B cell (primary cell): ENCODE measurements at regions of chr16 and their contacts with region 1.

Region 1: GRCh38 chr16:57734925-57735754 is 430 bp upstream of the KATNB1 start:
- DNase-seq: peak; percentile 99
- ATAC-seq: peak; percentile 88
- H3K4me3 ChIP-seq: peak overlapping the region; percentile 65 to 98 (median 90)
- H3K4me3 Mint-ChIP-seq: peak overlapping the region; percentile 93
- H3K27ac ChIP-seq: peak overlapping the region; percentile 37 to 78
- H3K27ac Mint-ChIP-seq: peak overlapping the region; percentile 89
- H3K4me1 ChIP-seq: peaks cover 15 to 19% of the 10 kb centered on the region in 2 donors
- H3K4me1 Mint-ChIP-seq: peaks cover 34% of the 10 kb centered on the region
- H3K27me3 ChIP-seq: no peaks in the 10 kb centered on the region
- H3K27me3 Mint-ChIP-seq: no peaks in the 10 kb centered on the region
- CTCF ChIP-seq: no peak

Region 2: GRCh38 chr16:57648590-57649442 is 86.3 kb before region 1 on chr16:
- CTCF ChIA-PET with region 1: interaction called, 6 read pairs
- POLR2A ChIA-PET with region 1: no interaction called
- intact Hi-C with region 1: loop called (anchors 5 kb)
- DNase-seq: peak; percentile 83
- ATAC-seq: peak; percentile 82
- H3K4me3 ChIP-seq: no peak overlapping the region
- H3K4me3 Mint-ChIP-seq: no peak overlapping the region
- H3K27ac ChIP-seq: peak overlapping the region; percentile 36 to 61
- H3K27ac Mint-ChIP-seq: peak overlapping the region; percentile 53
- H3K4me1 ChIP-seq: peaks cover 23 to 27% of the 10 kb centered on the region in 2 donors
- H3K4me1 Mint-ChIP-seq: peaks cover 32% of the 10 kb centered on the region
- H3K27me3 ChIP-seq: peaks cover 0 to 3% (median 0%) of the 10 kb centered on the region in 4 experiments
- H3K27me3 Mint-ChIP-seq: no peaks in the 10 kb centered on the region
- CTCF ChIP-seq: peak; percentile 99

Region 3: GRCh38 chr16:57694725-57695679 is 40.1 kb before region 1 on chr16 and contains the start of gene DRC7:
- CTCF ChIA-PET with region 1: interaction called, 3 read pairs
- POLR2A ChIA-PET with region 1: interaction called, 4 read pairs
- intact Hi-C with region 1: loop called (anchors 1 kb)
- DNase-seq: peak; percentile 76
- ATAC-seq: peak; percentile 71
- H3K4me3 ChIP-seq: peak within 1 kb of the TSS in 4 of 5 experiments; percentile 25 to 60 (median 55)
- H3K4me3 Mint-ChIP-seq: peak within 1 kb of the TSS; percentile 82
- H3K27ac ChIP-seq: peak within 1 kb of the TSS in 1 of 2 donors; percentile 60
- H3K27ac Mint-ChIP-seq: peak within 1 kb of the TSS; percentile 90
- H3K4me1 ChIP-seq: peaks cover 28 to 36% of the 10 kb centered on the region in 2 donors
- H3K4me1 Mint-ChIP-seq: peaks cover 19% of the 10 kb centered on the region
- H3K27me3 ChIP-seq: no peaks in the 10 kb centered on the region
- H3K27me3 Mint-ChIP-seq: no peaks in the 10 kb centered on the region
- CTCF ChIP-seq: no peak
- total RNA-seq, gene DRC7: 0.22 and 2.1 TPM in 2 replicates

Region 4: GRCh38 chr16:57757326-57757786 is 22.2 kb after region 1 on chr16:
- CTCF ChIA-PET with region 1: interaction called, 5 read pairs
- POLR2A ChIA-PET with region 1: no interaction called
- intact Hi-C with region 1: loop called (anchors 1 kb)
- DNase-seq: peak; percentile 77
- ATAC-seq: peak; percentile 94
- H3K4me3 ChIP-seq: no peak overlapping the region
- H3K4me3 Mint-ChIP-seq: no peak overlapping the region
- H3K27ac ChIP-seq: no peak overlapping the region
- H3K27ac Mint-ChIP-seq: no peak overlapping the region
- H3K4me1 ChIP-seq: peaks cover 0 to 3% of the 10 kb centered on the region in 2 donors
- H3K4me1 Mint-ChIP-seq: no peaks in the 10 kb centered on the region
- H3K27me3 ChIP-seq: no peaks in the 10 kb centered on the region
- H3K27me3 Mint-ChIP-seq: no peaks in the 10 kb centered on the region
- CTCF ChIP-seq: peak; percentile 80

Region 5: DNA sequence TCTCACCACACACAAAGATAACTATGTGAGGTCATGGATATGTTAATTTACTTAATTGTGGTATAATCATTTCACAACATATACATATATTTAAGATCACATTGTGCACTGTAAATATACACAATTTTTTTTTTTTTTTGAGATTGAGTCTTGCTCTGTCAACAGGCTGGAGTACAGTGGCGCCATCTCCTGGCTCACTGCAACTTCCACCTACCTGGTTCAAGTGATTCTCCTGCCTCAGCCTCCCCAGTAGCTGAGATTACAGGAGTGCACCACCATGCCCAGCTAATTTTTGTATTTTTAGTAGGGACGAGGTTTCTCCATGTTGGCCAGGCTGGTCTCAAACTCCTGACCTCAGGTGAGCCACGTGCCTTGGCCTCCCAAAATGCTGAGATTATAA is 571.2 kb after region 1 on chr16:
- CTCF ChIA-PET with region 1: no interaction called
- POLR2A ChIA-PET with region 1: no interaction called
- intact Hi-C with region 1: no loop called
- DNase-seq: peak; percentile 56
- ATAC-seq: no peak
- H3K4me3 ChIP-seq: no peak overlapping the region
- H3K4me3 Mint-ChIP-seq: no peak overlapping the region
- H3K27ac ChIP-seq: no peak overlapping the region
- H3K27ac Mint-ChIP-seq: no peak overlapping the region
- H3K4me1 ChIP-seq: no peaks in the 10 kb centered on the region
- H3K4me1 Mint-ChIP-seq: no peaks in the 10 kb centered on the region
- H3K27me3 ChIP-seq: no peaks in the 10 kb centered on the region
- H3K27me3 Mint-ChIP-seq: peaks cover 15% of the 10 kb centered on the region
- CTCF ChIP-seq: peak; percentile 73